Posterior cingulate gyrus (tissue), 11 donors: ENCODE measurements at regions of chr12 and their contacts with region 1.

Region 1: DNA sequence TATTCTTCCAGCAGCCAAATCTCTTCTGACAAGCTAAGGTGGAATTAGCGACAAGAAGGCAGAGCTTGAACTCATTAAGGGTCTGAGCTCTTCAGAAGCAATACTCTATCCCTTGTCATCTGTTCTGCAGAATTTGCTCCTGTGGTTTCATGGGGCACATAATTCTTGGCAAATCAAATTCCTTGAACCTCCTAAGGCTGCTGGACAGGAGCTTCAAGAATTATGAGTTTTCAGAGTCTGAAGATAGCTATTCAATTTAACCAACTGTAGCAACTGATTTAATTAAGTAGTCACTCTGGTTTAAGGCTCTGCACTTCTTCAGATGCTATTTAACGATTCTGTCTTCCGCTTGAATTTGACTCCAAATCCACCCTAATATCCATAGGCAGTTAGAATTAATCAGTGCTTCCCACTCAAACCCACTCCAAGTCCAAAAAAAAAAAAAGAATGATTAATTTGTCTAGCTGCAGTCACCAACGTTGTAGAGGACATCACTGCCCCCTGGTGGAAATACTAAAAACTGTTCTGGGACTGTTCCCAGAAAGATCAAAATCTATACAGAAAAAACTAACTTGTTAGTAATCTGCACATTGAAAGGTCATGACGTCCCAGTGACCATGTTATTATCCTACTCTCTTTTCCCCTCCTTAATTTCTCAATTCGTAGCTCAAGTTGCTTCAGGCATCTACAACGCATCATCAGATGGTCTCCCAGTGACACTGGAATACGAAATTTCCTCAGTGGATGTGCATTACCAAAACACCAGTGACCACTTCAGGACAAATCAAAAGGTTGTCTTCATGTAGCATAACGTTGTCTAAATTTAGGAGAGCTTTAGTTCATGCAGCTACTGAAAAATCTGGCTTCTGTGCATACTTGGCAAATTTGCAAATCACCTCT is 169.8 kb downstream of the KIF21A start:
- DNase-seq: peak in 2 of 10 donors; percentile 12 to 16

Region 2: GRCh38 chr12:38324896-38325295 is 948.2 kb before region 1 on chr12:
- intact Hi-C with region 1: loop called (anchors 5 kb)
- DNase-seq: no peak

Region 3: DNA sequence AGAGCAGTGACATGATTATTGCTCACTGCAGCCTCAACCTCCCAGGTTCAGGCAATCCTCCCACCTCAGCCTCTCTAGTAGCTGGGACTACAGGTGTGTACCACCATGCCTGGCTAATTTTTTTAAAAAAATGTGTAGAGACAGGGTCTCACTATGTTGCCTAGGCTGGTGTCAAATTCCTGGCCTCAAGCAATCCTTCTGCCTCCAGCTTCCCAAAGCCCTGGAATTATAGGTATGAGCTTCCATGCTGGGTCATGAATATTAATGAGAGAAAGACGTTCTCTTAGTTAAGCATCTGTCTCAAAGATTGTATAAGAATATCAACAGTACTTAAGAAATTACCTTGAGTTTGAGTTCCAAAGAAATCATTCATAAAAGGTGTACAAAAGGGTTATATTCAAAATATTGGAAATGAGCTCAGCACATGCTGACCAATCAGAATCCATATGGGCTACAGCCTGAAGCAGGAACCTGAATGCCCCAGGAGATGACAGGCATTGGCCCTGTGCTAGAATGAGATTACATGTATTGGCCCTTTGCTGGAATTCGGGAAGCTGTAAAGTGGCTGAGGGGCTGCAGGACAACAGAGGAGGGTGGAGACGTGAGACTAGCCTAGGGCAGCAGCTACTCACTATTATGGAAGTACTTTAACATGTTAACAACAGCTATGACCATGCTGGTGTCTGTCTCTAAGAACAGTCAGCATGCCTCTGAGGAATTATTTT is 210.7 kb before region 1 on chr12:
- intact Hi-C with region 1: no loop called
- DNase-seq: no peak